Dorsolateral prefrontal cortex (tissue), 120 donors: ENCODE measurements at regions of chr6 and their contacts with region 1.

Region 1: DNA sequence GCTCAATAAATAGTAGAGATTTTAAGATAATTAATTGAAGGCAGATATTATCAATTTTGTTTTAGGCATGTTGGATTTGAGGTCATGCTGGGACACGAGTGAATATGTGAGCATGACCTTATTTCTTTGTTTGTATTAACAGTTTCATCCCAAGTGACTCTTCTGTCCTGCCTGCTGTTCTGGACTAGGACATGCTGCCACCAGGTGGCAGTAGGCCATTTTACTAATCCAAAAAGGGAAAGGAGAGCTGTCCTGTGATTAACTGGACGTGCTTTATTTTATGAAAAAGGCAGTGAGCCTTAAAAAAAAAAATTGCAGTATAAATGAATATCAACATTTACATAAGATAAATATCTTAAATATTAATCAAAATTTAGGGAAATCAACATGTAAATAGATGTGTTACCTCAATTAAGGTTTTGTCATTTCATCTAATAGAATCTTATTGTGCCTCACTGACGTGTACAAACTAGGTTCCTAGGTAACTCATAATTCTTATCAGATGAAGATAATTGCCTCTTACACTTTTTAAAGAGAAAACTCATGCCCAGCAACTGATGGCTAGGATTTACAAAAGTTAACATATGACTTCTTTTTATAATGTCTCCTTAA is 49.8 kb downstream of the FRK start:
- DNase-seq: peak; percentile 41 to 85 (median 68)
- H3K4me3 ChIP-seq: peak overlapping the region in 24 of 59 donors; percentile 2 to 42 (median 15)
- H3K27ac ChIP-seq: peak overlapping the region in 52 of 59 donors; percentile 12 to 97 (median 85)
- H3K27me3 ChIP-seq: no peaks in the 10 kb centered on the region
- CTCF ChIP-seq: peak; percentile 79 to 97 (median 92)

Region 2: DNA sequence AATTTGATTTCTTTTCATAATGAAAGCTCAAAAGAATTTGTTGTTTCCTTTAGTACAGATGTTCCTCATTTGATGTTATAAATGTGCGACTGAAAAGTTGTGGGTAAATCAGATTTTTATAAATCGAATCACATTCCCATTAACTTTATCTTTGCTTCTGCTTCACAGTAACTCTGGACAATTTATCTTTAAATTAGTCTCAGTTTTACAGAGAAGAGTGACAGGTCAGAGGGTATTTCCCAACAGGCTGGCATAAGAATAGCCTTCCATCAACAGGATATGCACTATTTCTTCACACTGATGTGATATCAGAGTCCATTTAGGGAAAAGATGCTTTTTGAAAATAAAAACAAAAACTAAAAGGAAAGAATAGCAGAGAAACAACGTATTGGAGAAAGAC is 237.2 kb before region 1 on chr6:
- intact Hi-C with region 1: no loop called
- DNase-seq: no peak
- H3K4me3 ChIP-seq: no peak overlapping the region
- H3K27ac ChIP-seq: no peak overlapping the region
- H3K27me3 ChIP-seq: no peaks in the 10 kb centered on the region
- CTCF ChIP-seq: no peak

Region 3: GRCh38 chr6:115976321-115976870 is 34.5 kb before region 1 on chr6:
- intact Hi-C with region 1: loop called (anchors 2 to 5 kb)
- DNase-seq: no peak
- H3K4me3 ChIP-seq: peak overlapping the region in 18 of 59 donors; percentile 1 to 48 (median 8)
- H3K27ac ChIP-seq: peak overlapping the region; percentile 19 to 98 (median 93)
- H3K27me3 ChIP-seq: no peaks in the 10 kb centered on the region
- CTCF ChIP-seq: peak in 5 of 56 donors; percentile 2 to 39 (median 14)